CD8-positive, alpha-beta T cell (primary cell): ENCODE measurements at regions of chrX and their contacts with region 1.

Region 1: GRCh38 chrX:11724122-11725017 is 33.7 kb upstream of the MSL3 start:
- DNase-seq: peak in 3 of 9 experiments; percentile 8 to 52 (median 37)
- ATAC-seq: no peak
- H3K4me3 ChIP-seq: no peak overlapping the region
- H3K4me3 Mint-ChIP-seq: no peak overlapping the region
- H3K27ac ChIP-seq: no peak overlapping the region
- H3K27ac Mint-ChIP-seq: no peak overlapping the region
- H3K4me1 ChIP-seq: no peaks in the 10 kb centered on the region
- H3K4me1 Mint-ChIP-seq: no peaks in the 10 kb centered on the region
- H3K27me3 ChIP-seq: no peaks in the 10 kb centered on the region
- H3K27me3 Mint-ChIP-seq: peaks cover 5% of the 10 kb centered on the region
- CTCF ChIP-seq: peak; percentile 55

Region 2: DNA sequence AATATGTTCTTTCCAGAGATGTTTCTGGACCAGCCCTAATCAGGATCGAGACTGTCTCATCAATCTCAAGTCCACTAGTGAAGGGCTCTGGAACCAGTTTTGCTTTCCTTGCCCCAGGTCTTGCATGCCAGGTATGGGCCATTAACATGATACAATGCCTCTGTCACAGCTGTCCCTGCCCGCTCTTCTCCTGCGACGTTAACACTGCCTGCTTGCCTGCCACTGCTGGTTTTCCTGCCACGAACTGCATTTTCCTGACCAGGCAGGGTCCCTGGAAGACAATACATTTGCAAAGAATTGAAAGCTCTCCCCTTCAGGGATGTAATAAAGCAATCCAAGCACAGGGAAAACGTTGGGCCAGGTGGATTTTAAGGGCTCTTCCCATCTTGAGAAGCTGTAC is 1304.2 kb before region 1 on chrX:
- CTCF ChIA-PET with region 1: no interaction called
- POLR2A ChIA-PET with region 1: no interaction called
- intact Hi-C with region 1: no loop called
- DNase-seq: no peak
- ATAC-seq: no peak
- H3K4me3 ChIP-seq: no peak overlapping the region
- H3K4me3 Mint-ChIP-seq: no peak overlapping the region
- H3K27ac ChIP-seq: no peak overlapping the region
- H3K27ac Mint-ChIP-seq: no peak overlapping the region
- H3K4me1 ChIP-seq: no peaks in the 10 kb centered on the region
- H3K4me1 Mint-ChIP-seq: no peaks in the 10 kb centered on the region
- H3K27me3 ChIP-seq: no peaks in the 10 kb centered on the region
- H3K27me3 Mint-ChIP-seq: no peaks in the 10 kb centered on the region
- CTCF ChIP-seq: no peak

Region 3: GRCh38 chrX:11745881-11746280 is 21.5 kb after region 1 on chrX:
- CTCF ChIA-PET with region 1: no interaction called
- POLR2A ChIA-PET with region 1: no interaction called
- intact Hi-C with region 1: loop called in 1 of 2 experiments (anchors 1 kb)
- DNase-seq: no peak
- ATAC-seq: no peak
- H3K4me3 ChIP-seq: no peak overlapping the region
- H3K4me3 Mint-ChIP-seq: no peak overlapping the region
- H3K27ac ChIP-seq: no peak overlapping the region
- H3K27ac Mint-ChIP-seq: no peak overlapping the region
- H3K4me1 ChIP-seq: no peaks in the 10 kb centered on the region
- H3K4me1 Mint-ChIP-seq: no peaks in the 10 kb centered on the region
- H3K27me3 ChIP-seq: no peaks in the 10 kb centered on the region
- H3K27me3 Mint-ChIP-seq: no peaks in the 10 kb centered on the region
- CTCF ChIP-seq: no peak

Region 4: DNA sequence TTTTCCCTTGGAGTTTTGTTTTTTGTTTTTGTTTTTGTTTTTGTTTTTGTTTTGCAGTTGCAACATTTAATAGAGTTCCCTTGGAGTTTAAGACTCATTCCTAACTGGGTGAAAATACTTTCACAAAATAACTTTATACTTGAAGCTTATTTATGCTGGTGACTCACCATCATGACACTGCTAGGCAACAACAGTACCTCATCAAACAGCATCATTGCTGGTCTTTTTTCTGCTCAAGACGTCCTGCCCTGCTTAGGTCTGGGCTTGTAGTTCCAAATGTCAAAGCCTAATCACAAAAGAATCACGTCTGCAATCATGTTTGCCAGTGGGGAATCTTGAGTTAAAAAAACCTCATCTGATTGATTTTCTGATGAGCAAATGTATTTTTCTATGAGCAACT is 961.2 kb after region 1 on chrX:
- CTCF ChIA-PET with region 1: no interaction called
- POLR2A ChIA-PET with region 1: no interaction called
- intact Hi-C with region 1: no loop called
- DNase-seq: no peak
- ATAC-seq: no peak
- H3K4me3 ChIP-seq: no peak overlapping the region
- H3K4me3 Mint-ChIP-seq: no peak overlapping the region
- H3K27ac ChIP-seq: no peak overlapping the region
- H3K27ac Mint-ChIP-seq: no peak overlapping the region
- H3K4me1 ChIP-seq: no peaks in the 10 kb centered on the region
- H3K4me1 Mint-ChIP-seq: no peaks in the 10 kb centered on the region
- H3K27me3 ChIP-seq: no peaks in the 10 kb centered on the region
- H3K27me3 Mint-ChIP-seq: no peaks in the 10 kb centered on the region
- CTCF ChIP-seq: no peak